Activated B cell treated with CpG ODN at 0.5 μM for 24 hours (primary cell): ENCODE measurements at regions of chr3 and their contacts with region 1.

Region 1: GRCh38 chr3:4540267-4540666 is 47.1 kb downstream of the ITPR1 start:
- DNase-seq: no peak
- ATAC-seq: no peak
- H3K4me3 Mint-ChIP-seq: no peak overlapping the region
- H3K27ac Mint-ChIP-seq: no peak overlapping the region
- H3K4me1 Mint-ChIP-seq: peaks cover 49% of the 10 kb centered on the region
- H3K27me3 Mint-ChIP-seq: no peaks in the 10 kb centered on the region
- CTCF ChIP-seq: no peak

Region 2: DNA sequence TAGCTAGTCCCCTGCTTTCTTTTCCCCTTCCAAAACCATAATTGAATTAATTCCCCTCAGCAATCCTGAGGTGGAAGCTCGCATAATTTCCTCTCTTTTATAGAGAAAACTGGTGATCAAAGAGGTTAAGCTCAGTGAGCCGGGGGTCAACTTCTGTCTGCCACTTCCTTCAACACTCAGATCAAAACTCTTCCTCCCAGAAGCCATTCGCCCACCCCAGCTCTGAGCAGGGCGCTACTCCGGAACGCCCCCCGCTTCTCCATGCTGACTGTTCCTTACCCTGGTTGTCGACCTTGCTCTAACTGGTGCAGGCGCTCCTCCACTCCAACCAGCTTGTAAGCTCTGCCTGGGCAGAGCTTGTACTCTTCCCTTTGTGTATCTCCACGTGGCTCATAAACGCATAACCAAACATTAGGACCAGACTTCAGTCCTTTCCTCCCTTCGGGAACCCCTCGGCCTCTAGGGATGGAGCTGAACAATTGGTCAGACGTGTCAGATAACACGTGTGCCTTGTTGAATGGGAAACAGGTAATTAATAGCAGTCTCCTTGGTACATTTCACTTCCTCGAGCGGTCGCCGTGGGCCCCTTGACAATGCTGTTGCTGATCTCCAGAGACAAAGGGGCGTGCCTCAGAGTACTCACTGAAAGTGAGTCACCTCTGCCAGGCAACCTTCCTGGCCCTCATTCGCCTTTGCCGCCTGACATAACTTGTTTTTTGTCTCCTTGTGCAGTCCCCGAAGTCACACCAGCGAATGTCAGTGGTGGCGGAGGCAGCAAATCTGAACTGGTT is 1501.9 kb before region 1 on chr3:
- CTCF ChIA-PET with region 1: no interaction called
- POLR2A ChIA-PET with region 1: no interaction called
- intact Hi-C with region 1: no loop called
- DNase-seq: no peak
- ATAC-seq: no peak
- H3K4me3 Mint-ChIP-seq: no peak overlapping the region
- H3K27ac Mint-ChIP-seq: no peak overlapping the region
- H3K4me1 Mint-ChIP-seq: no peaks in the 10 kb centered on the region
- H3K27me3 Mint-ChIP-seq: peaks cover 8% of the 10 kb centered on the region
- CTCF ChIP-seq: no peak

Region 3: DNA sequence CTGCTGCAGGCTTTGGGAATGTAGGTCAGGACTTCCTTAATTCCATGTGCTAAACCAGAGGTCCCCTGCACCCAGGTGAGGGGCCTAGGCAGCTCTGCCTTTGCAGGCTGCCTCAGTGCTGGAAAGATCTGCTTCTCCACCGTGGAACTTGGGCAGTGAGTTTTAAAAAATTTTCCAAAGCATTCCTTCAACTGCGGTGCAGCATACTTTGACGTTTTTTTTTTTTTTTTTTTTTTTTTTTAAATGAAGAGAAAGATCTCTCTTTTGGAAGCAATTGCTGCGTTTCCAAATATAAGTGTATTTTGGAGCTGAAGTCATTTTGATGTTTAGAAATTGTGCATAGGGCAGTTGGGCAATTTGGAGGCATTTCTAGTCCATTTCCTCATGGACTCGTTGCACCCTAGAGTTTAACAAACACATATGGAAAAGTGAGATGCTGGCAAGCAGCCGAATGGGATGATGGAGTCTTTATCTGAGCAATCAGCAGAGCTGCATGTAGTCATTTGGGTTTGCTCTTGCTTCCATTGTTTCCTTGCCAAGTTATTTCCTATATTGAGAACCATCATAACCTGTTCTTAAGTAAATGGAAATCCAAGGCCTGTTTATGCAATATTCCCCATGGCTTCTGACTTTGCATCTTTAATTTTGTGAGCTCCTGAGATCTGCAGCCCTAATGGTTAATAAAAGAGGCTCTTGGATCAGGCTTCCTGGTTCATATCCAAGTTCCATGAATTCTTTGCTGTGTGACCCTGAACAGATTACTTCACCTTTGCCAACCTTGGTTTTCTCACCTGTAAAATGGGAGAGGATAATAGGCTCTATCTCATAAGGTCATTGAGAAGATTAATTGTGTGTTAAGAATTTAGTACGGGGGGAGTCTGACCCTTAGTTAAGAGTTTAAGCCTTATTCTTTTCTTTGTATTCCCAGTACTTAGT is 15.9 kb before region 1 on chr3:
- CTCF ChIA-PET with region 1: interaction called, 3 read pairs
- POLR2A ChIA-PET with region 1: no interaction called
- intact Hi-C with region 1: loop called (anchors 2 kb)
- DNase-seq: no peak
- ATAC-seq: no peak
- H3K4me3 Mint-ChIP-seq: no peak overlapping the region
- H3K27ac Mint-ChIP-seq: no peak overlapping the region
- H3K4me1 Mint-ChIP-seq: peaks cover 66% of the 10 kb centered on the region
- H3K27me3 Mint-ChIP-seq: no peaks in the 10 kb centered on the region
- CTCF ChIP-seq: no peak

Region 4: GRCh38 chr3:4565806-4566501 is 25.7 kb after region 1 on chr3:
- CTCF ChIA-PET with region 1: no interaction called
- POLR2A ChIA-PET with region 1: no interaction called
- intact Hi-C with region 1: no loop called
- DNase-seq: no peak
- ATAC-seq: no peak
- H3K4me3 Mint-ChIP-seq: no peak overlapping the region
- H3K27ac Mint-ChIP-seq: peak overlapping the region; percentile 3
- H3K4me1 Mint-ChIP-seq: peaks cover 50% of the 10 kb centered on the region
- H3K27me3 Mint-ChIP-seq: no peaks in the 10 kb centered on the region
- CTCF ChIP-seq: no peak

Region 5: GRCh38 chr3:4644951-4645350 is 104.7 kb after region 1 on chr3:
- CTCF ChIA-PET with region 1: no interaction called
- POLR2A ChIA-PET with region 1: no interaction called
- intact Hi-C with region 1: no loop called
- DNase-seq: no peak
- ATAC-seq: no peak
- H3K4me3 Mint-ChIP-seq: no peak overlapping the region
- H3K27ac Mint-ChIP-seq: no peak overlapping the region
- H3K4me1 Mint-ChIP-seq: no peaks in the 10 kb centered on the region
- H3K27me3 Mint-ChIP-seq: no peaks in the 10 kb centered on the region
- CTCF ChIP-seq: no peak